H1 (cell line): ENCODE measurements at regions of chr9 and their contacts with region 1.

Region 1: DNA sequence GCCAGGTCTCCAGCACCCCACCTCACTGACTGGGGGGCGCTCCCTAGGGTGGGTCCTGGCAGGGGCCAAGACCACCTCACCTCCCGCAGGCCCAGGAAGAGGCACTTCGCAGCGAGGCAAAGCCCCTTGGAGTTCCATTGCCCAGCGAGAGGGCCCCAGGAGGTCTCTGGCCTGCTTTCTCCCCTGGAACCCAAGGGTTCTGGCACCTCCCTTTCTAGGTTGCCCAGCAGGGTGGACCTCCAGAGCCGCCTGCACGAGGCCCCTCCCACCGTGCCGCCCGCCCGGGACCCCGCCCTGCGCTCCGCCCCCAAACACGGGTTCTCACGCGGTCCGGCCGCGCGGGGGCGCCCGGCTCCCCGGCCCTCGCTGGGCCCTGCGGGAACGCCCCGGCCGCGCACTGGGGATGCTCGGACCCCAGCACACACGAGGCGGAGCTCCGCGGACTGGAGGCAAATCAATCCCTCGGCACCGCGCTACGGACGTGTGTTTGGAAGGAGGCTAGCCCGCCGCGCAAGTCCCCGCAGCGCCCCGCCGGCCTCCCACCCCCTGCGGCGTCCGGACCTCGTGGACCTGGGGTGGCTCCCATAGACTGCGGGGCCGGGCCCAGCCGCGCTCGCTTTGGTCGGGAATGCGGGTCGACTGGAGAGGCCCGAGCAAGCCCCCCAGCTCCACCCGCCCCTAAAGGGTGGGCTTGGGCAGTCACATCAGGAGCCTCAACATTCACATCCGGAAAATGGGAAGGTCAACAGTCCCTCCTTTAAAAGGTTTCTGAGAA is 99.5 kb upstream of the LMX1B start:
- DNase-seq: peak in 1 of 2 experiments; percentile 96
- H3K4me3 ChIP-seq: peak overlapping the region in 1 of 4 experiments; percentile 50; a peak in 3 of 8 replicates
- H3K27ac ChIP-seq: no peak overlapping the region
- H3K4me1 ChIP-seq: peaks cover 0 to 12% (median 8%) of the 10 kb centered on the region in 4 experiments; a peak in 6 of 7 replicates
- H3K27me3 ChIP-seq: peaks cover 0 to 12% (median 7%) of the 10 kb centered on the region in 4 experiments; a peak in 4 of 7 replicates
- CTCF ChIP-seq: peak; percentile 55 to 79 (median 62)
- EP300 ChIP-seq: peak in 1 of 2 experiments; percentile 22; a peak in 1 of 3 replicates
- POLR2A ChIP-seq: no peak
- RAD21 ChIP-seq: peak; percentile 6 to 63; a peak in 2 of 4 replicates

Region 2: DNA sequence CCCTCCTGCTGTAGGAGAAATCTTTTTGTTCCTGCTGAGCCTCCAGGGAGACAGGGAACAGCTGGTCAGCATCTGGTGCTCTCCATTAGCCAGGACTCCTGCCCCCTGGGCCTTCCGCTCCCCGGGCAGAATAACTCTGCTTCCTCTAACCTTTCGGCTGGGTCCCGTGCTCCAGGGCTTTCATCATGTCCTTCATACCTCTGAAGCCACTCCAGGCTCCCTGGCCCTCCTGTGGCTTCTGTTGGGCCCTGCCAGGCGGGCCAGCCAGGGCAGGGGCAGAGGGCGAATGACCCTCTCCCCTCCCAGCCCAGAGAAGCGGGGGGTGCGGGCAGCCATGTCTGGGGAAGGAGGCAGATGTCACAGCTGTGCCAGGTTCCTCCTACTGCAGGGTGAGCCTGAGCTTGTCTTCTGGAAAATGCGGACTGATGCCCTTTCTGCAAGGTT is 17.8 kb after region 1 on chr9:
- CTCF ChIA-PET with region 1: interaction called, 31 read pairs
- POLR2A ChIA-PET with region 1: interaction called, 6 read pairs
- DNase-seq: no peak
- H3K4me3 ChIP-seq: no peak overlapping the region
- H3K27ac ChIP-seq: no peak overlapping the region
- H3K4me1 ChIP-seq: peaks cover 14 to 38% (median 19%) of the 10 kb centered on the region in 4 experiments
- H3K27me3 ChIP-seq: peaks cover 0 to 8% (median 5%) of the 10 kb centered on the region in 4 experiments; a peak in 5 of 7 replicates
- CTCF ChIP-seq: no peak
- EP300 ChIP-seq: no peak
- POLR2A ChIP-seq: no peak
- RAD21 ChIP-seq: no peak

Region 3: DNA sequence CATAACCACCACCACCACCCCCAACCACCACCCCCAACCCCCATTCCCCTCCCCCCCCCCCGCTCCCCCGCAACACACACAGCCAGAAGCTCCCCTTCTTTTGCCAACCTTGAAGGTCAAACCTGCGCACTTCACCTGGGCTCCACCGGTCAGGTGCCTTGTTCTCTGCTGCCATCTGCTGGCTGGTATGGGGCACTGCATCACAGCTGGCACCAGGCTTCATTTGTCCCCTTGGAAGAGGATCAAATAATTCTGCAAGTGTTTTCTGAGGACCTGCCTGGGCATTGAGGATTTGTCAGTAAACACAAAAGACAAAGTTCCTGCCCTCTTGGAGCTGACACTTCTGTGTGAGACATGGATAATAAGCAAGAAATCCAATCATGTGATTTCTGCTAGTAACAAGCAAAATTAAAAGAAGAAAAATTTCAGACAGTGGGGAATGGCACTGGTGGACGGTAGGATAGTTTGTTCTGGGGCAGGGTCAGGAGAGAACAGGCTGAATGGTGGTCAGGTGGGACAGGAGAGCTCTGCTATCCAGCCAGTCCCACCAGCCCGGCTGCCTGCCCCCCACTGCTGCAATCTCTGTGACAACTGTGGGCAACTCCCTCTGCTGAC is 43.9 kb after region 1 on chr9:
- CTCF ChIA-PET with region 1: interaction called, 343 read pairs
- POLR2A ChIA-PET with region 1: interaction called, 3 read pairs
- DNase-seq: peak; percentile 29 to 93
- H3K4me3 ChIP-seq: no peak overlapping the region
- H3K27ac ChIP-seq: no peak overlapping the region
- H3K4me1 ChIP-seq: peaks cover 0 to 2% (median 0%) of the 10 kb centered on the region in 4 experiments; a peak in 2 of 7 replicates
- H3K27me3 ChIP-seq: no peaks in the 10 kb centered on the region; a peak in 1 of 7 replicates
- CTCF ChIP-seq: peak; percentile 98 to 99 (median 98)
- EP300 ChIP-seq: no peak
- POLR2A ChIP-seq: no peak
- RAD21 ChIP-seq: peak; percentile 96 to 98

Region 4: GRCh38 chr9:126564711-126565110 is 50.5 kb after region 1 on chr9:
- CTCF ChIA-PET with region 1: interaction called, 26 read pairs
- POLR2A ChIA-PET with region 1: interaction called, 3 read pairs
- DNase-seq: no peak
- H3K4me3 ChIP-seq: no peak overlapping the region
- H3K27ac ChIP-seq: no peak overlapping the region
- H3K4me1 ChIP-seq: no peaks in the 10 kb centered on the region; a peak in 1 of 7 replicates
- H3K27me3 ChIP-seq: peaks cover 0 to 3% (median 0%) of the 10 kb centered on the region in 4 experiments; a peak in 2 of 7 replicates
- CTCF ChIP-seq: peak; percentile 69 to 73 (median 71)
- EP300 ChIP-seq: no peak
- POLR2A ChIP-seq: no peak
- RAD21 ChIP-seq: peak; percentile 41 to 64